CD4-positive, alpha-beta T cell (primary cell): ENCODE measurements at regions of chr15 and their contacts with region 1.

Region 1: DNA sequence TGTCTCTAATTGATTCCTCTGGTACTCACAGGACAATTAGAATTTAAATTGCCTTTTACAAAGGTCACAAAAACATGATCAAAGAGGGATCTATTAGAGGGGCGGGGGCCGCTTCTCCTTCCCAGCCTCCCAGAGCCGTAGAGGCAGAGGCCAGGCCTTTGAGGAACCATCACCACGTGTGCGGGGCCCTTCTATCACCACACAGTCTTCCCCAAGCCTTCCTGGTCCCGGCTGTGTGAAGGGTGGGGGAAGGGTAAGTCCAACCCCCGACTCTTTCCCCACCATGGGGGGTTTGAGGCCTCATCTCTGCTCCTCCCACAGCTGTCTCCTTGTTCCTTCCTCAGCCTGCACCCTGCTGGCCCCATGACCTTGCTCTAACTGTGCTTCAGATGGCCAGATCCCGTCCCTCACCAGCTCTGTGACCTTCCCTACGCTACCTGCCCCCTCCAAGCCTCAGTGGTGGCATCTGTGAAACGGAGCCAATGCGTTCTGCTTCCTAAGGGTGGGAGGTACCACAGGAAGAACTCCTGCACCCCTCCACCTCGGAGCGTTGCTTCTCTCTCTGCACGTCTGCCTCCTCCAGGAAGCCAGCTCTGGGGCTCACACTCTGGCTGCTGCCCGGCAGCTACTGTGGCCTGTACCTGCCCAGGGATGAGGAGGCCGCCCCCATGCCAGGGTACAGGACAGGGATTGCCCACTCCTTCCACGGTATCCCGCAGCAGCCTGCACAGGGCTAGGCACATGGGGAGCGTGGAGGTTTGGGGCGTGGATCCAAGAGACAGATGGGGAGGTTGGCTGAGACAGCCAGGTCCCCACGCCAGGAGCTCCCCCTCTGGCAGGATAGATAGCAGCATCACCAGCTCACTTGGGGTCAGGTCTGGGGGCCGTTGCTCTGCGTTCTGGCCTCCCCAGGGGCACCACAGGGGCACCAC is 83.9 kb downstream of the LINGO1 start:
- DNase-seq: no peak
- ATAC-seq: no peak
- H3K4me3 ChIP-seq: no peak overlapping the region
- H3K4me3 Mint-ChIP-seq: no peak overlapping the region
- H3K27ac ChIP-seq: no peak overlapping the region
- H3K27ac Mint-ChIP-seq: no peak overlapping the region
- H3K4me1 ChIP-seq: no peaks in the 10 kb centered on the region
- H3K4me1 Mint-ChIP-seq: no peaks in the 10 kb centered on the region
- H3K27me3 ChIP-seq: peaks cover 0 to 2% of the 10 kb centered on the region in 2 experiments
- H3K27me3 Mint-ChIP-seq: no peaks in the 10 kb centered on the region
- CTCF ChIP-seq: no peak

Region 2: GRCh38 chr15:77186594-77187011 is 362.3 kb before region 1 on chr15:
- CTCF ChIA-PET with region 1: interaction called, 6 read pairs
- POLR2A ChIA-PET with region 1: no interaction called
- intact Hi-C with region 1: loop called in 1 of 2 experiments (anchors 2 kb)
- DNase-seq: peak in 3 of 14 experiments; percentile 35 to 44 (median 40)
- ATAC-seq: no peak
- H3K4me3 ChIP-seq: no peak overlapping the region
- H3K4me3 Mint-ChIP-seq: no peak overlapping the region
- H3K27ac ChIP-seq: no peak overlapping the region
- H3K27ac Mint-ChIP-seq: no peak overlapping the region
- H3K4me1 ChIP-seq: peaks cover 7% of the 10 kb centered on the region
- H3K4me1 Mint-ChIP-seq: peaks cover 33% of the 10 kb centered on the region
- H3K27me3 ChIP-seq: no peaks in the 10 kb centered on the region
- H3K27me3 Mint-ChIP-seq: no peaks in the 10 kb centered on the region
- CTCF ChIP-seq: peak; percentile 16

Region 3: GRCh38 chr15:77497104-77497829 is 51.6 kb before region 1 on chr15:
- CTCF ChIA-PET with region 1: no interaction called
- POLR2A ChIA-PET with region 1: no interaction called
- intact Hi-C with region 1: no loop called
- DNase-seq: no peak
- ATAC-seq: no peak
- H3K4me3 ChIP-seq: no peak overlapping the region
- H3K4me3 Mint-ChIP-seq: no peak overlapping the region
- H3K27ac ChIP-seq: no peak overlapping the region
- H3K27ac Mint-ChIP-seq: no peak overlapping the region
- H3K4me1 ChIP-seq: peaks cover 16% of the 10 kb centered on the region
- H3K4me1 Mint-ChIP-seq: peaks cover 19% of the 10 kb centered on the region
- H3K27me3 ChIP-seq: no peaks in the 10 kb centered on the region
- H3K27me3 Mint-ChIP-seq: no peaks in the 10 kb centered on the region
- CTCF ChIP-seq: peak; percentile 51